ENCODE measurements at regions of chr14 and their contacts with region 1.

Region 1: GRCh38 chr14:23057757-23058653 is 685 bp upstream of the CDH24 start:
- DNase-seq: peak; percentile 90
- ATAC-seq: peak; percentile 73

Region 2: GRCh38 chr14:22556990-22557623 is 500.9 kb before region 1 on chr14:
- intact Hi-C with region 1: loop called (anchors 10 kb)
- DNase-seq: peak; percentile 84
- ATAC-seq: peak; percentile 88

Region 3: DNA sequence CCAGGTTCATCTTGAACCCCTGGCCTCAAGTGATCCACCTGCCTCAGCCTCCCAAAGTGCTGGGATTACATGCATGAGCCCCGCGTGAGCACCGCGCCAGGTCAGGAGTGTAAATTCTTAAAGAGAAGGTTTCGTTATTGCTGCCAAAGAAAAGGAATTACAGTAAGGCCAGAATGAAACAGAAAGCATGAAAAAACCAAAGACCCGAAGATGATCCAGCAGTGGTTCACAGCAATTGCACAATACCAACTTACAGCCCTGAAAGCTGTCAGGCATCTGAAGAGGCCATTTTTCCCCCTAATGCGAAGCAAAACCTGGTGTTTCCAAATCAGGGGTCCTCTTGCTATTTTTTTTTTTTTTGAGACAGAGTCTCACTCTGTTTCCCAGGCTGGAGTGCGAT is 149.4 kb before region 1 on chr14:
- intact Hi-C with region 1: no loop called
- DNase-seq: no peak
- ATAC-seq: no peak

Region 4: GRCh38 chr14:22929104-22929847 is 128.7 kb before region 1 on chr14 and contains the start of gene PRMT5:
- intact Hi-C with region 1: loop called (anchors 5 kb)
- DNase-seq: peak; percentile 98
- ATAC-seq: peak; percentile 98
- total RNA-seq, gene PRMT5: 48.7 TPM

Region 5: DNA sequence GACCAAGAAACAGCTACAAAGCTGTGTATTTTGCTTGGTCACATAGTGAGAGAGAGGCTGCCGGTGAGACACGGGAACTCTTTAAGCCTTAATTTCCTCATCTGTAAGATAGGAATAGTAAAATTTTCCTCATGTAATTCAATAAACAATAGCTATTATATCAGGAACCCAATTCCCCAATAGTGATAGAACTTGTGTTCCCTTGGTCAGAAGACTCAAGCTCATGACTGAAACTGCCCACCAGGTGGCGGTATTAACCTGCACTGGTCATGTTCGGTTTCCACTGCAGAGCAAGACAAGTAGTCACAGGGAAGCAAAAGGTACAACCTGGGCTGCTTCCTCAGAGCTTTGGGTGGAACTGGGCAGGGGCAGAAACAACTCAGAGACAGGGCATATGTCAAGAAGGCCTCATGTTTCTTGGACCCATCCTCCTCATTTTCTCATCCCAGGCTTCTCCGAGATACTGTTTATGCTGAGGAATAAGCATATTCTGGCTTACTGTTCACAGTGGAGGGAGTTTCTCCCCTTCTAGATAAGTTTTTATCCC is 71.4 kb before region 1 on chr14:
- intact Hi-C with region 1: loop called (anchors 1 kb)
- DNase-seq: peak; percentile 85
- ATAC-seq: peak; percentile 30

Region 6: GRCh38 chr14:22994762-22995275 is 63.2 kb before region 1 on chr14:
- intact Hi-C with region 1: loop called (anchors 2 kb)
- DNase-seq: no peak
- ATAC-seq: peak; percentile 45

Region 7: GRCh38 chr14:23025151-23025814 is 32.7 kb before region 1 on chr14:
- intact Hi-C with region 1: no loop called
- DNase-seq: no peak
- ATAC-seq: no peak

Region 8: DNA sequence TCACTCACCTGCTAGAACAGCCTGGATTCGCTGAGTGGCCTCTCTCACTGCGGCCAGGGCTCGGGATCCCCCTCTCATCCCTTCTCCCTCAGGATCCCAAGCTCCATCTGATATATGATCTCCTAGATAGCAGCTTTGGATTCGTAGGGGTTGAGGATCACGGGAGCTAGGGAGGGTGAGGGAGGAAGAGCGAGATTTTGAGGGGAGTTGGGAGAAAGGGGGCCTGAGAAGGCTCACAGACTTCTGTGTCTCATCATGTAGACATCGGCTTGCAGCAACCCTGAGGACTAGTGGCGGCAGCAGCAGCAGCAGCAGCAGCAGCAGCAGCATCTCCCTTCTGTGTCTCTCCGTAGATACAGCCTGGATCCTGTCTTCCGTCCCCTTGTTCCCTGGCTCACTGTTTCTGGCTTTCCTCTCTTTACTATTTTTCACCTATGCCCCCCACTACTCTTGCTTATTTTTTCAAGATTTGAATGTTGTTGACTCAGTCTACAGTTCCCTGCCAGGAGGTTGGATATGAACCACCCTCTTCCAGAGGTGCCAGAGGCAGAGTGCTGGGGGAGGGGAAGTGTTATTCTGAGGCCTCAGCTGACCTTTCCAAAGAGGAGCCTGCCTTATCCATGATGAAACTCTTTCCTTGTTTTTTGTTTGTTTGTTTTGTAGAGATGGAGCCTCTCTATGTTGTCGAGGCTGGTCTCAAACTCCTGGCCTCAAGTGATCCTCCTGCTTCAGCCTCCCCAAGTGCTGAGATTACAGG is 46.8 kb after region 1 on chr14 and contains the start of gene CIROP:
- intact Hi-C with region 1: loop called (anchors 5 kb)
- DNase-seq: no peak
- ATAC-seq: no peak
- total RNA-seq, gene CIROP: not detected